Motor neuron (in vitro differentiated cells): ENCODE measurements at regions of chr1 and their contacts with region 1.

Region 1: DNA sequence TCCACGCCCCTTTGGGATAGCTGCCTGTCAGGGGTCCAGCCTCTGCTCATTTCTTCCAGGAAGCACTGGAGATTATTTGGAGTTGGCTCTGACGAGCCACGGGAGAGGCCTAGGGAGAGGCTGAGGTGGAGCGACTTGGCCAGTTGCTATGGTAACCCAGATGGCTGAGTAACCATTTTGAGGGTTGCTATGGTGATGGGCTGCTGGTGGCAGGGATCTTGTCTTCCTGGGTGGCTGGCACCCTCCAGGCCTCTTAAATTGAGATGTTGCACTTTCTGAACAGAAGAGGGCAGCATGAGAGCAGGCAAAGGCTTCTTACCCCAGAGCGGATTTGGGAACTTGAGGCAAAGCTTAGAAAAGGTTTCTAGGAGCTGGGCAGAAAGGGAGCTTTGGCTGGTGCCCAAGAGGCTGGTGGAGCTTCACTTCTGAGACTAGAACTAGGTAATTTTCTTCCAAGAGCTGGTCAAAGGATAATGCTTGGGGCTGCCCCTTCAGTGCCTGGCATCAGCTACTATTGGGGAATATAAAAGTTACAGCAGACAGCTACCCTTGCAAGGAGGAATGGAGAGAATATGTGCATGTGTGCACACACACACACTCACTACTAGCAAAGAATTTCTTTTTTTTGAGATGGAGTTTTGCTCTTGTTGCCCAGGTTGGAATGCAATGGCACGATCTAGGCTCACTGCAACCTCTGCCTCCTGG is 72.5 kb downstream of the NDUFS5 start:
- ATAC-seq: peak; percentile 69 to 96 (median 91)
- H3K4me3 ChIP-seq: no peak overlapping the region
- H3K27ac ChIP-seq: peak overlapping the region; percentile 2 to 19
- H3K4me1 ChIP-seq: peaks cover 28 to 29% of the 10 kb centered on the region in 2 donors

Region 2: DNA sequence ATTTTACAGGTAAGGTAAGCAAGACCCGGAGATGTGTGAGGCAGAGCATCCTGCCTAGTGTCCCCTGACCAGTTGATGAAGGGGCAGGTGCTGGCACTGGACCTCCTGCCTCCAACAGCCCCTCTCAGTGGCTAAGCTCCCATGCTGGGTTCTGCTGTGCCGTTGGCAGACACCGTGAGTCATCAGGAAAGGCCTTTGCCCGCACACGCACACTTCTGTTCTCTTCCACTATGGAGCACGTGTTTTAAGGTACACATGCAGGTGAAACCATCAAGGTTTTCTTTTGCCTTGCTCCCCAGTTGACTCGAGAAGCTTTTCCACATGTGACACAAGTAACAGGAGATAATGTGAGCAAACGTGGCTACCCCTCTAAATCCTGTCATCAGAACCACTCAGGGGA is 447.0 kb before region 1 on chr1:
- in situ Hi-C with region 1: no loop called
- ATAC-seq: no peak
- H3K4me3 ChIP-seq: no peak overlapping the region
- H3K27ac ChIP-seq: no peak overlapping the region
- H3K4me1 ChIP-seq: peaks cover 1% of the 10 kb centered on the region in 2 donors

Region 3: DNA sequence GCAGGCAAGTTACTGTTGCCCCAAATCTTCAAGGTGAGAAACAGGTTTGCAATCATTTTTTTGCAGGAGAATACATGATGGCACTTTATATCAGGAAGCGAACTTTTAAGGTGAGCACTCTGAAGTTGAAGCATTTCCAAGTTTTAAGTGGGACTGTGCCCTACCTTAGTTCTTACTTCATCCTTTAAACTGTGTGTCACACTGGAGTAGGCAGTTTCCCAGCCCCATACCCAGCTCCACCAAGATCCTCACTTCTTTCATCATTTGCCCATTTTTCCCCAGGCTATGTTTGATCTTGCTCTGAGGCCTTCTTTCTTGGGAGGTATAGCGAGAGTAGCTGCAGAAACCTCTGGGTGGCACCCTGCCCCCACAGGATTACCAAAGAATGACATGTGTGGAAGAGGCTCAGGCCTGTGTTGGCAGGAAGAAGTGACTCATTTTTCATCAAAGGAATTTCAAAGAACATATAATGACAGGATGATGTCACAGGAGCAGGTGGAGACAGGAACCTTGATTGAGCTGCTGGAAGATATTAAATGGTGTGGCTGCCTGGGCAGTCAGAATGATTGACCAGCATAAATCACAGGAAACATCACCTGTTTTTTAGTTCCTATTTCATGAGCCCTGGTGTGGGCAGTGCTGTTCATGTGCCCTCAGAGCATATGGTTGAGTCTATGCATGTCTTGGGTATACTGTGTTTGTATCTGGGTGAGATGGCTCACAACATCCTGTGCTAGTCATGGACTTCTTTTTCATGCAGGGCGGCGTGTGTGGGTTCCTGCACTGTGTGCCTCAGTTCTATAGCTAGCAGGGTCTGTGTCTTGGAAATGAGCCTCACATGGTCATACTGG is 85.0 kb after region 1 on chr1:
- in situ Hi-C with region 1: loop called in 1 of 9 experiments (anchors 10 kb)
- ATAC-seq: peak; percentile 95 to 98 (median 96)
- H3K4me3 ChIP-seq: no peak overlapping the region
- H3K27ac ChIP-seq: peak overlapping the region in 1 of 2 donors; percentile 39
- H3K4me1 ChIP-seq: peaks cover 0 to 13% of the 10 kb centered on the region in 2 donors

Region 4: GRCh38 chr1:39258146-39258924 is 159.6 kb after region 1 on chr1:
- in situ Hi-C with region 1: loop called in 4 of 9 experiments (anchors 10 to 25 kb)
- ATAC-seq: peak; percentile 82 to 94 (median 92)
- H3K4me3 ChIP-seq: no peak overlapping the region
- H3K27ac ChIP-seq: no peak overlapping the region
- H3K4me1 ChIP-seq: peaks cover 4 to 7% of the 10 kb centered on the region in 2 donors

Region 5: GRCh38 chr1:39268112-39268581 is 169.4 kb after region 1 on chr1:
- in situ Hi-C with region 1: loop called in 4 of 9 experiments (anchors 10 to 25 kb)
- ATAC-seq: peak; percentile 69 to 92 (median 78)
- H3K4me3 ChIP-seq: peak overlapping the region; percentile 3 to 55 (median 39)
- H3K27ac ChIP-seq: peak overlapping the region; percentile 64 to 69
- H3K4me1 ChIP-seq: peaks cover 49 to 58% of the 10 kb centered on the region in 2 donors

Region 6: DNA sequence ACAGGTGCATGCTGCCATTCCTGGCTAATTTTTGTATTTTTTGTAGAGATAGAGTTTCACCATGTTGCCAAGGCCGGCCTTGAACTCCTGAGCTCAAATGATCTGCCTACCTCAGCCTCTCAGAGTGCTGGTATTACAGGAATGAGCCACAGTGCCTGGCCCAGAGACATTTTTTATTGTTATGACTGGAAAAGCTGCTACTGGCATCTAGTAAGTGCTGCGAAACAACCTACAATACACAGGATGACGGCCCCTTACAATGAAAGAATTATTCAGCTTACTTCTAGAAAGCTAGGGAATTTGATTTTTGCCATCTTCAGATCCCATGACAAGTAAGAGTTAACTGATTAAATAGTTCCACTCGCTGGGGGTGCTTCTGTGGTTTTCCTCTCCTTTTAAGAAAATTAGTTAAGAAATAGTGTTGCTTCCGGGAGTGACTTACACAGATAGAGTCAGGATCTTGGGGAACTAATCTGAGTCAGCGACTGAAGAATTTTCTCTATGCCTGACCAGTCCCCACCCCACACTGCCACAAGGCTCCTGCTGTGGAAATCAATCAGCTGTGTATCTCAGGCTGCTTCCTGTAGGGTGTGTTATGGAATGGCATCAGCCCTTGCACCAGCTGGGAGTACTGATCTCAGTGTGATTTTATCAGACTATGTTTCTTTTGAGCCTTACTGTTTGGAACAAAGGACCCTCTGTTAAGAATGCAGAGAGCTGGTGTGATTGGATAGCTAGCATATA is 299.8 kb after region 1 on chr1:
- in situ Hi-C with region 1: loop called in 1 of 9 experiments (anchors 25 kb)
- ATAC-seq: peak; percentile 96 to 99 (median 99)
- H3K4me3 ChIP-seq: no peak overlapping the region
- H3K27ac ChIP-seq: peak overlapping the region; percentile 44 to 48
- H3K4me1 ChIP-seq: peaks cover 18% of the 10 kb centered on the region in 2 donors

Region 7: DNA sequence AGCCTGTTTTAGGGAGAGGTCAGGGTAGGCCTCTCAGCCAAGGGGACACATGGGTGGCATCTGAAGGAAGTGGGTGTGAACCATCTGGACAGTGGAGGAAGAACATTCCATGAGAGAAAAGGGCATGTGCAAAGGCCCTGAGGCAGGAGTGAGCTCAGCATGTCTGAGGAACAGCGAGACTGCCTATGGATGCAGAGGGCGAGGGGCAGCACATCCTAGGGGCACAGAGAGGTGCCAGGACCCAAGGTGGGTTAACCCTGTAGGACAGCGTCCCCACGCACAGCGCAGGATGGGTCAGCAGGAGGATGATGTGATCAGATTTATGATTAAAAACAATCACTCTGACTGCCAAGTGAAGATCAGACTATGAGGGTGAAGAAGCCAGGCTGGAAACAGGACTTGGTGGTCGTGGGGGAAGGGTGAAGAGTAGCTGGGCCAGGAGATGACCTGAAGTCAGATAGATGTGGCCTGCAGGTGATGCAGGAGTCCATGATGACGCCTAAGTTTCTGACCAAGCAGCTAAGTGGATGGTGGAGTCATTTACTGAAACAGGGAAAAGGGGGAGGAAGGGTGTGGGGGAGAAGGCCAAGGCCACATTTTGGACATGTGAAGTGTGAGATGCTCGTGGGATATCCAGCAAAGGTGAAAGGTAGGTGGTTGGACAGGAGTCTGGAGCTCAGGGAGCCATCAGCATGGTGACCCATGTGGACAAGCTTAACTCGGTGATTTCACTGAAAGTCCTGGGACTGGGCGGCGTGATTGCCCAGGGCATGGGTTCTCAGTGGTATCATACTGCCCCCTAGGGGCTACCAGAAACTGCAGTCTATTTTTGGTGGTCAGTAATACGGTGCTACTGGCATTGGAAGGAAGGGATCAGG is 440.1 kb after region 1 on chr1:
- in situ Hi-C with region 1: loop called in 1 of 9 experiments (anchors 25 kb)
- ATAC-seq: peak; percentile 90 to 99 (median 96)
- H3K4me3 ChIP-seq: no peak overlapping the region
- H3K27ac ChIP-seq: no peak overlapping the region
- H3K4me1 ChIP-seq: no peaks in the 10 kb centered on the region